WTC11 (cell line): ENCODE measurements at regions of chr9 and their contacts with region 1.

Region 1: GRCh38 chr9:131008909-131009618 is at the start of gene LAMC3:
- DNase-seq: peak; percentile 58
- ATAC-seq: peak; percentile 66
- H3K4me3 Mint-ChIP-seq: peak within 1 kb of the TSS; percentile 64
- H3K27ac Mint-ChIP-seq: no peak within 1 kb of the TSS
- H3K4me1 Mint-ChIP-seq: peaks cover 30% of the 10 kb centered on the region
- H3K27me3 Mint-ChIP-seq: peaks cover 16% of the 10 kb centered on the region
- CTCF ChIP-seq: no peak
- total RNA-seq, gene LAMC3: 35.9 to 50.9 TPM (median 36.0 TPM) in 3 replicates

Region 2: DNA sequence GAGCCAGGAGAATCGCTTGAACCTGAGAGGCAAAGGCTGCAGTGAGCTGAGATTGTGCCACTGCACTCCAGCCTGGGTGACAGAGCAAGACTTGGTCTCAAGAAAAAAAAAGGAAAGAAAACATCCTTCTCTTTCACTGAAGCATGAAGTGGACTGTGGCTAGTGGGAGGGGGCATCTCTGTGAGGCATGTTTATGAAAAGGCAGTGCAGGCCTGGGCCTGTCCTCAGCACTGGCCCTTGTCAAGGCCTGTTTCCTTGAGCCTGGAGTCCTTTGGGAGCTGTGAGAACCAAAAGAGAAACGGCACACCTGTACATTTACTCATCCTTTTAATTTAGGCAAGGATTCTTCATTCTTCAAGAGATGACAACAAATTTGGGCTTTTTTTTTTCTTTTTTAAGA is 448.0 kb before region 1 on chr9:
- CTCF ChIA-PET with region 1: no interaction called
- POLR2A ChIA-PET with region 1: interaction called, 15 read pairs
- DNase-seq: no peak
- ATAC-seq: no peak
- H3K4me3 Mint-ChIP-seq: no peak overlapping the region
- H3K27ac Mint-ChIP-seq: no peak overlapping the region
- H3K4me1 Mint-ChIP-seq: peaks cover 2% of the 10 kb centered on the region; the same call in 1 of the 2 replicates
- H3K27me3 Mint-ChIP-seq: no peaks in the 10 kb centered on the region
- CTCF ChIP-seq: no peak